ENCODE measurements at regions of chr1 and their contacts with region 1.

Region 1: GRCh38 chr1:228165372-228166169 is at the start of gene IBA57:
- DNase-seq: peak; percentile 99
- CTCF ChIP-seq: peak; percentile 92

Region 2: DNA sequence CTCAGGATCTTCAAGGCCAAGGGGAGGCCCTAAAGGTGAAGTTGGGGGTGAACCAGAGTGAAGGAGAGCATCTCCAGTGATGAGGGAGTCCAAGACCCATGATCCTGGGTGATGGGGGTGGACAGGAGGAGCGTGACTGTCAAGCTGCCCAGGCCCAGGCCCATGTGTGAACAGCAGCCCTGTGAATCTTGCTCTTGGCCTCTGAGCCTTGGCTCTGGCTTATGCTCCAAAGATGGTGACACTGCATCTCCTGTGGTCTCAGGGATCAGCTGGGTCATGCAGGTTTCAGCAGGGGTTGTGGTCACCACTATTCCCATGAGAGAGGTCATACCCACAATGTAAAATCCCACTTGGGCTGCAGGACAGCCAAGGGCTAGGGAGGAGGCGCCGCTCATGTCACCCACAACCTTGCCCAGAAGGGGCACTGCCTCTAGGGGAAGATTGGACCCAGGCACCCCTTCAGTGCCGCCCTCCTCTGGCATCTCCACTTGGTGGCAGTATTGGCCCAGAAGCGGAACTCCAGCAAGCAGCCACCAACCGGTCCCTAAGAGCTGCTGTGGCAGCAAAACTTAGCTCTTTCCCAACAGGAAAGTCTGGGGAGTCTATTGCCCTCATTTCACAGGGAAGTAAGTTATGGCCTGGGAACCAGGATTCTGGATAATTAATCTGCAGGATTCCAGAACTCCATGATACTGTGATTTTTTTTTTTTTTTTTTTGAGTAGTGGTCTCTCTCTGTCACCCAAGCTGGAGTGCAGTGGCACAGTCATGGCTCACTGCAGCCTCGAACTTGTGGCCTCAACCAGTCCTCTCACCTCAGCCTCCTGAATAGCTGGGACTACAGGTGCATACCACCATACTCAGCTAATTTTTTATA is 166.3 kb before region 1 on chr1:
- CTCF ChIA-PET with region 1: interaction called, 10 read pairs
- POLR2A ChIA-PET with region 1: no interaction called
- DNase-seq: peak; percentile 82
- CTCF ChIP-seq: peak; percentile 80

Region 3: GRCh38 chr1:228109073-228109961 is 56.3 kb before region 1 on chr1 and contains the start of gene MRPL55:
- CTCF ChIA-PET with region 1: interaction called, 11 read pairs
- POLR2A ChIA-PET with region 1: no interaction called
- DNase-seq: peak; percentile 98
- CTCF ChIP-seq: no peak

Region 4: DNA sequence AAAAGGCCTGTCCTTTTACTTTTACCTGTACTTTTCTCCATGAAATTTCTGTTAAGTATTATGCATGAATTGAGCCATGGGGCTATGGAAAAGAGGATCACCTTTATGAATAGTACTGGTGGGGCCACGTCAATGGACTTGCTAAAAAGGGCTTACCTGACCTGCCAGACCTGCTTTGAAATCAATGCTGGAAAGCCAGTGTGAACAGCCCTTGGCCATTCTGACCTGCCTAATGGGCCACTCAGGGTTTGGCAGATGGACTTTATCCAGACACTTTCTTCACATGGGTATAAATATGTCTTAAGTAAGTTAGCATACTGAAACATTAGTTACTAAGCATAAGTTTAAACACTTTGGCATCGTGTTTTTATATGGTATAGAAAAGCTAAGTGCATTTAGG is 33.8 kb before region 1 on chr1:
- CTCF ChIA-PET with region 1: interaction called, 54 read pairs
- POLR2A ChIA-PET with region 1: no interaction called
- DNase-seq: no peak
- CTCF ChIP-seq: no peak

Region 5: DNA sequence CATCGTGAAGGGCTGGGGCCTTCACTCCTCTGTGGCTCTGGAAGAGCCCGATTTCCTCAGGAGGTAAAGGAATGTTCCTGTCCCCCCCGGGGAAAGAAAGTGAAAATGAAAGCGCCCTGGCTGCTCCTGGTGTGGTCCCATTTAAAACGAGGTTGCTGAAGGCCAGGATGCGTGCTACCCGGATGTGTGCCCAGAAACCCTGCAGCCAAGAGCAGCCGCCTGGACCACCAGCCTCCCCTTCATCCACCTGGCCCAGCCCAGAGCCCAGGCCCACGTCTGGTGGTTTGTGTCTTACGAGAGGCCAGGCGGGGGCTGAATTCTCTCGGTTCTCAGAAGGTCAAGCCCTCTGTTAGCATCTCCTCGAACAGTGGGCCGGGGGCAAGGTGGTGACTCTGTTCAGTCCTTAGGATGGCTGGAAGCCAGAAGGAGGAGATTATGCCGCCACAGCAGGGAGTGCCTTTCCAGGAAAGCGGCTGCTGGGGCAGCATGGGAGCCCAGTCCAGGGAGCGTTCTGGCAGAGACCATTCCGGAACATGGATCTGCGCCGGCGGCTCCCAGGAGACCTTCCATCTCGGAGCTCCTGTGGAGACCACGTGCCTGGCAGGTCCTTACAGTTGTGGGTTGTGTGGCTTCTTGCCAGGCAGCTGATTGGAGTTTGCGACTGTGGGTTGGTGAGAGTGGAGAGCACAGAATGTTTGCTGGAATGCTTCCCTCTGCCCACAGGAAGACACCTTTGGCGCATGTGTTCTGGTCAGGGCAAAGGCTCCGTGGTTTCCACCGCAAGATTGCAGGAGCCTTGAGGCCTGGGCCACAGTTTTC is 24.1 kb before region 1 on chr1:
- CTCF ChIA-PET with region 1: interaction called, 41 read pairs
- POLR2A ChIA-PET with region 1: no interaction called
- DNase-seq: peak; percentile 48
- CTCF ChIP-seq: no peak

Region 6: GRCh38 chr1:228154670-228155571 is 10.7 kb before region 1 on chr1:
- CTCF ChIA-PET with region 1: interaction called, 13 read pairs
- POLR2A ChIA-PET with region 1: interaction called, 8 read pairs
- DNase-seq: no peak
- CTCF ChIP-seq: no peak